HCT116 (cell line): ENCODE measurements at regions of chr15 and their contacts with region 1.

Region 1: GRCh38 chr15:84929744-84930371 is 45.4 kb downstream of the SLC28A1 start:
- DNase-seq: peak; percentile 94
- ATAC-seq: peak; percentile 88
- H3K4me3 ChIP-seq: peak overlapping the region in 1 of 2 experiments; percentile 36; a peak in 2 of 4 replicates
- H3K27ac ChIP-seq: peak overlapping the region; percentile 61
- H3K4me1 ChIP-seq: peaks cover 24 to 35% of the 10 kb centered on the region in 2 experiments
- H3K27me3 ChIP-seq: no peaks in the 10 kb centered on the region
- CTCF ChIP-seq: no peak
- POLR2A ChIP-seq: no peak
- RAD21 ChIP-seq: peak; percentile 35; the same call in 1 of the 2 replicates

Region 2: GRCh38 chr15:84142888-84143337 is 786.9 kb before region 1 on chr15:
- CTCF ChIA-PET with region 1: no interaction called
- POLR2A ChIA-PET with region 1: no interaction called
- RAD21 ChIA-PET with region 1: no interaction called
- intact Hi-C with region 1: loop called (anchors 10 kb)
- DNase-seq: peak; percentile 81
- ATAC-seq: peak; percentile 99
- H3K4me3 ChIP-seq: no peak overlapping the region
- H3K27ac ChIP-seq: no peak overlapping the region
- H3K4me1 ChIP-seq: peaks cover 0 to 5% of the 10 kb centered on the region in 2 experiments; a peak in 1 of 4 replicates
- H3K27me3 ChIP-seq: no peaks in the 10 kb centered on the region
- CTCF ChIP-seq: peak; percentile 74 to 87 (median 86); a peak in 5 of 6 replicates
- POLR2A ChIP-seq: no peak
- RAD21 ChIP-seq: peak; percentile 86

Region 3: GRCh38 chr15:84658080-84658787 is 271.6 kb before region 1 on chr15 and contains the start of gene NMB:
- CTCF ChIA-PET with region 1: interaction called, 4 read pairs
- POLR2A ChIA-PET with region 1: interaction called, 3 read pairs
- RAD21 ChIA-PET with region 1: interaction called in 1 of 2 experiments, 3 read pairs
- intact Hi-C with region 1: loop called (anchors 1 kb)
- DNase-seq: peak; percentile 24
- ATAC-seq: peak; percentile 50
- H3K4me3 ChIP-seq: peak within 1 kb of the TSS; percentile 31 to 56
- H3K27ac ChIP-seq: peak within 1 kb of the TSS; percentile 58
- H3K4me1 ChIP-seq: peaks cover 14 to 33% of the 10 kb centered on the region in 2 experiments
- H3K27me3 ChIP-seq: no peaks in the 10 kb centered on the region
- CTCF ChIP-seq: peak; percentile 14 to 30 (median 22); a peak in 3 of 6 replicates
- POLR2A ChIP-seq: no peak
- RAD21 ChIP-seq: no peak; the same call in 1 of the 2 replicates
- total RNA-seq, gene NMB: 9.8 TPM

Region 4: DNA sequence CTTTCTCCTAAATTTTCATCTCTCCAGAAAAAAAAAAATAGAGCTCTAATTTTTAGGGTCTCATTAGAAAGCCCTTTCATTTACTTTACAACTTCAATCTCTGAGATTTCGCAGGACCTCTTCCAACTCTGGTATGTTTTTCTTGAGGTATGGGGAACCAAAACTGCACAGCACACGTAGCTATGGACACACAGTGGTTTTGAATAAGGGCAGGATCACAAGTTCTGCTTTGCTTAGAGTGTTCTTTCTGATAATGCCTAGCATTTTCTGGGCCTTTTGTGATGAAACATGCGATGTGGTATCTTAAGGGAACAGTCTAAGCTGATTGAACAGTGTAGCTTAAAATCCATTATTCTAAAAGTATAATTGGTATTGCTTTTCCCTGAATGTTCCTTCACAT is 156.1 kb before region 1 on chr15:
- CTCF ChIA-PET with region 1: no interaction called
- POLR2A ChIA-PET with region 1: no interaction called
- RAD21 ChIA-PET with region 1: no interaction called
- intact Hi-C with region 1: no loop called
- DNase-seq: no peak
- ATAC-seq: no peak
- H3K4me3 ChIP-seq: no peak overlapping the region
- H3K27ac ChIP-seq: no peak overlapping the region
- H3K4me1 ChIP-seq: no peaks in the 10 kb centered on the region
- H3K27me3 ChIP-seq: no peaks in the 10 kb centered on the region
- CTCF ChIP-seq: no peak
- POLR2A ChIP-seq: no peak
- RAD21 ChIP-seq: no peak

Region 5: DNA sequence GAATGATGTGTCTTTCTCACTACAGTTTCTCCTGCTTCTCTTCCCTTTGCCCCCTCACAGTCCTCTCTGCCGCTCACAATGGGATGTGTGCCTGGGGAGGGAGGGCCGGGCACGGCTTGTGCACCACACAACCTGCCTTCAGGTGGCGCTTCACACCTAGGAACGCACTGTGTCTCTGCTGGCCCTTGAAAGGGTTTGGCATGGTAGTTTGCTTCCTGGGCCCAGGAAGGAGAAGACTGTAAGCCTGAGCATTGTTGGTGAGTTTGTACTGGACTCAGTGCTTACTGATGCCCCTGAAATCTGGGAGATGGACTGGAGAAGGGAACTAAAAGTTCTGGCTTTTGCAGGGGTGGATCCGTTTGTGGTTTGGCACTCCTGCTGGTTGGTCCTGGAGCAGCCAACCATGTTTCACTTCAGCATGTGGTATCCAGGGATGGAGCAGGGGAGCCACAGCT is 103.5 kb before region 1 on chr15:
- CTCF ChIA-PET with region 1: interaction called, 11 read pairs
- POLR2A ChIA-PET with region 1: no interaction called
- RAD21 ChIA-PET with region 1: interaction called, 3 read pairs
- intact Hi-C with region 1: loop called (anchors 1 kb)
- DNase-seq: peak; percentile 56
- ATAC-seq: peak; percentile 99
- H3K4me3 ChIP-seq: no peak overlapping the region
- H3K27ac ChIP-seq: no peak overlapping the region
- H3K4me1 ChIP-seq: peaks cover 0 to 12% of the 10 kb centered on the region in 2 experiments; a peak in 3 of 4 replicates
- H3K27me3 ChIP-seq: no peaks in the 10 kb centered on the region
- CTCF ChIP-seq: peak; percentile 80 to 92 (median 89)
- POLR2A ChIP-seq: no peak
- RAD21 ChIP-seq: peak; percentile 98

Region 6: DNA sequence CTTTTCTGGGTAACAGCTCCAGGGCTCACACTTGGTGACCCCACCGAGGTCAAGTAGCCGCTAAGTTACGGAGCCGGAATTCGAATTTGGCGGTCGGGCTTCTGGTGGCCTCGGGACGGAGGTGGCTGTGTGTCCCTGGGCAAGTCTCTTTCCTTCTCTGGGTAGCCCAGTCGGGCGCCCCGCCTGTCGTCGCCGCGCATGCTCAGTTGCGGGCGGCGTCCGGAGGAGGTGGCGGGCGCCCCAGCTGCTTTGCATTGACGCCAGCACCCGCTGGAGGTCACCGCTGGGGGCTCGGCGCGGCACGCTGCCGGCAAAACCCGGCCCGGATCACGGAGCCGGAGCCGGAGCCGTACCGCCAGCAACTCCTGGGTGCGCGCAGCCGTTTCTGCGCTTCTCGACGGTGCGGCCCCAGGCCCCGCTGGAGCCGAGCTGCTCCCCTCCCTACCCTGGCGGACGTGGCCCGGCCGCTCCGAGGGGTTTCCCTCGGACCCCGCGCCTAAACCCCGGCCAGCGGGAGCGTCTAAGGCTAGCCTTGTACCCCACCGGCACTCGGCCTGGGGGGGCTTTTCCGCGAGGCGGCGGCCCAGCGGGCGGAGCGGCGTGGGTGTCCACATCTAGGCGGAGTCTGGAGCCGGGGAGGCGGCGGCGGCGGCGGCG is 51.3 kb after region 1 on chr15:
- CTCF ChIA-PET with region 1: interaction called, 5 read pairs
- POLR2A ChIA-PET with region 1: no interaction called
- RAD21 ChIA-PET with region 1: no interaction called
- intact Hi-C with region 1: loop called (anchors 2 kb)
- DNase-seq: peak; percentile 92
- ATAC-seq: peak; percentile 81
- H3K4me3 ChIP-seq: peak overlapping the region; percentile 69 to 75
- H3K27ac ChIP-seq: peak overlapping the region; percentile 91
- H3K4me1 ChIP-seq: peaks cover 10 to 31% of the 10 kb centered on the region in 2 experiments; a peak in 3 of 4 replicates
- H3K27me3 ChIP-seq: no peaks in the 10 kb centered on the region
- CTCF ChIP-seq: no peak
- POLR2A ChIP-seq: peak; percentile 48
- RAD21 ChIP-seq: peak; percentile 20; the same call in 1 of the 2 replicates

Region 7: GRCh38 chr15:85172846-85173490 is 243.1 kb after region 1 on chr15:
- CTCF ChIA-PET with region 1: no interaction called
- POLR2A ChIA-PET with region 1: no interaction called
- RAD21 ChIA-PET with region 1: no interaction called
- intact Hi-C with region 1: no loop called
- DNase-seq: no peak
- ATAC-seq: no peak
- H3K4me3 ChIP-seq: no peak overlapping the region
- H3K27ac ChIP-seq: no peak overlapping the region
- H3K4me1 ChIP-seq: peaks cover 7 to 16% of the 10 kb centered on the region in 2 experiments
- H3K27me3 ChIP-seq: no peaks in the 10 kb centered on the region
- CTCF ChIP-seq: no peak
- POLR2A ChIP-seq: no peak
- RAD21 ChIP-seq: no peak